ENCODE measurements at regions of chr2 and their contacts with region 1.

Region 1: GRCh38 chr2:64330281-64331113 is 123.5 kb upstream of the LGALSL start:
- DNase-seq: peak; percentile 63 to 92 (median 74)
- ATAC-seq: peak; percentile 24
- H3K4me3 ChIP-seq: no peak overlapping the region
- H3K4me3 Mint-ChIP-seq: peak overlapping the region; percentile 81
- H3K27ac ChIP-seq: no peak overlapping the region
- H3K27ac Mint-ChIP-seq: peak overlapping the region; percentile 50
- H3K4me1 ChIP-seq: peaks cover 36% of the 10 kb centered on the region
- H3K4me1 Mint-ChIP-seq: peaks cover 38% of the 10 kb centered on the region
- H3K27me3 ChIP-seq: no peaks in the 10 kb centered on the region
- H3K27me3 Mint-ChIP-seq: no peaks in the 10 kb centered on the region
- CTCF ChIP-seq: peak; percentile 86

Region 2: GRCh38 chr2:63698825-63699548 is 631.5 kb before region 1 on chr2:
- CTCF ChIA-PET with region 1: no interaction called
- POLR2A ChIA-PET with region 1: no interaction called
- intact Hi-C with region 1: loop called in 1 of 2 experiments (anchors 10 kb)
- DNase-seq: peak in 6 of 14 experiments; percentile 4 to 61 (median 29)
- ATAC-seq: peak; percentile 70
- H3K4me3 ChIP-seq: no peak overlapping the region
- H3K4me3 Mint-ChIP-seq: no peak overlapping the region
- H3K27ac ChIP-seq: no peak overlapping the region
- H3K27ac Mint-ChIP-seq: no peak overlapping the region
- H3K4me1 ChIP-seq: no peaks in the 10 kb centered on the region
- H3K4me1 Mint-ChIP-seq: no peaks in the 10 kb centered on the region
- H3K27me3 ChIP-seq: no peaks in the 10 kb centered on the region
- H3K27me3 Mint-ChIP-seq: no peaks in the 10 kb centered on the region
- CTCF ChIP-seq: peak; percentile 44

Region 3: GRCh38 chr2:64203858-64204632 is 126.5 kb before region 1 on chr2:
- CTCF ChIA-PET with region 1: no interaction called
- POLR2A ChIA-PET with region 1: interaction called, 5 read pairs
- intact Hi-C with region 1: loop called (anchors 5 to 10 kb)
- DNase-seq: peak in 9 of 14 experiments; percentile 10 to 94 (median 18)
- ATAC-seq: peak; percentile 30
- H3K4me3 ChIP-seq: peak overlapping the region; percentile 42
- H3K4me3 Mint-ChIP-seq: peak overlapping the region; percentile 80
- H3K27ac ChIP-seq: peak overlapping the region; percentile 72 to 88
- H3K27ac Mint-ChIP-seq: peak overlapping the region; percentile 92
- H3K4me1 ChIP-seq: peaks cover 48% of the 10 kb centered on the region
- H3K4me1 Mint-ChIP-seq: peaks cover 90% of the 10 kb centered on the region
- H3K27me3 ChIP-seq: no peaks in the 10 kb centered on the region
- H3K27me3 Mint-ChIP-seq: no peaks in the 10 kb centered on the region
- CTCF ChIP-seq: no peak

Region 4: GRCh38 chr2:64273524-64274398 is 56.7 kb before region 1 on chr2:
- CTCF ChIA-PET with region 1: no interaction called
- POLR2A ChIA-PET with region 1: no interaction called
- intact Hi-C with region 1: no loop called
- DNase-seq: peak in 3 of 14 experiments; percentile 23 to 62 (median 51)
- ATAC-seq: no peak
- H3K4me3 ChIP-seq: no peak overlapping the region
- H3K4me3 Mint-ChIP-seq: no peak overlapping the region
- H3K27ac ChIP-seq: no peak overlapping the region
- H3K27ac Mint-ChIP-seq: no peak overlapping the region
- H3K4me1 ChIP-seq: peaks cover 20% of the 10 kb centered on the region
- H3K4me1 Mint-ChIP-seq: peaks cover 23% of the 10 kb centered on the region
- H3K27me3 ChIP-seq: no peaks in the 10 kb centered on the region
- H3K27me3 Mint-ChIP-seq: no peaks in the 10 kb centered on the region
- CTCF ChIP-seq: no peak

Region 5: DNA sequence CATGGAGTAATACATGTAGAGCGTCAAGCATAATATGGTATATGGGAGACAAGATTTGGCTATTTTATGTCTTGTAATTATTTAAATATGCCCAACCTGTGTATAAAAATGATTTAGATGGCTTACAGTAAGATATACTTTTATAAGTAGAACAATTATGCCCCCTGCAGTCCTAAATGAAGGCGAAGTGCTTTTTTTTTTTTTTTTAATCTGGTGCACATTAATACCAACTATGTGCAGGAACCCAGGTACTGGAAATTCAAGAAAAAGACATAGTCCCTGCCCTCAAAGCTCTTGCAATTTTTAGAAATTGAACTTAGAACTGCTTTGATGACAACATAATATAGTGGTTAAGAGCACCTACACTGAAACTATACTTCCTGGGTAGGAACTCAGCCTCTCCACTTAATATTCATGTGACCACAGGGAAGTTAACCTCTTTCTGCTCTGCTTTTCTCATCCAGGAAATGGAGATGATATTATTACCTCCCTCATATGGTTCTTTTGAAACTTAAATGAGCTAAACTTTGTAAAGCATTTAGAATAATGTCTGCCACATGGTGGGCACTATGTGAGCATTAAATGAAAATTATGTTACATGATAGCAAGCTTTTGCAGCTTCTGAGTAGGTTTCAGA is 231.8 kb after region 1 on chr2:
- CTCF ChIA-PET with region 1: no interaction called
- POLR2A ChIA-PET with region 1: interaction called, 3 read pairs
- intact Hi-C with region 1: loop called (anchors 1 to 2 kb)
- DNase-seq: peak in 3 of 14 experiments; percentile 56 to 62 (median 62)
- ATAC-seq: peak; percentile 73
- H3K4me3 ChIP-seq: no peak overlapping the region
- H3K4me3 Mint-ChIP-seq: no peak overlapping the region
- H3K27ac ChIP-seq: no peak overlapping the region
- H3K27ac Mint-ChIP-seq: peak overlapping the region; percentile 24
- H3K4me1 ChIP-seq: no peaks in the 10 kb centered on the region
- H3K4me1 Mint-ChIP-seq: peaks cover 42% of the 10 kb centered on the region
- H3K27me3 ChIP-seq: no peaks in the 10 kb centered on the region
- H3K27me3 Mint-ChIP-seq: no peaks in the 10 kb centered on the region
- CTCF ChIP-seq: no peak

Region 6: DNA sequence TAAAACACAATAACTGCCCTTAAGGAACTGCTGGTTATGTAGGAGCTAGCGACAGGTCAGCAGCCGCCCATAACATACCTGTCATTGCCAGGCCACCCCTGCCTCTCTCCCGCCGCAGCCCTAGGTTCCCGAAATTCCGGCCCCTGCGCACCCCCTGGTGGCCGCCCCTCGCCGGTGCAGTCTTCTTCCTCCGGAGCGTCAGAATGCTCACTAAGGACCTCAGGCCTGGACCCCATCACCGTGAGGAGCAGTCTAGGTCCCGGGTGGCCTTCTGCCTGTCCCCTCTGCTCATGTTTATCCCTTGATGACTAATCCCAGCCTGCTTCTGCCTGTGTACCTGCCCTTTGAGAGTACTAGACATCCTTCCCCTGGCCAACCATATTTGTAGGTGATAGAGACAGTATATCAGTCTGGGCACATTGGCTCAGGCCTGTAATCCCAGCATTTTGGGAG is 543.0 kb after region 1 on chr2:
- CTCF ChIA-PET with region 1: interaction called, 3 read pairs
- POLR2A ChIA-PET with region 1: no interaction called
- intact Hi-C with region 1: loop called (anchors 1 kb)
- DNase-seq: peak; percentile 53 to 86 (median 74)
- ATAC-seq: peak; percentile 98
- H3K4me3 ChIP-seq: peak overlapping the region; percentile 24
- H3K4me3 Mint-ChIP-seq: peak overlapping the region; percentile 4
- H3K27ac ChIP-seq: no peak overlapping the region
- H3K27ac Mint-ChIP-seq: no peak overlapping the region
- H3K4me1 ChIP-seq: peaks cover 9% of the 10 kb centered on the region
- H3K4me1 Mint-ChIP-seq: peaks cover 7% of the 10 kb centered on the region
- H3K27me3 ChIP-seq: no peaks in the 10 kb centered on the region
- H3K27me3 Mint-ChIP-seq: no peaks in the 10 kb centered on the region
- CTCF ChIP-seq: peak; percentile 96